Psoas muscle (tissue), 8 donors: ENCODE measurements at regions of chr4 and their contacts with region 1.

Region 1: GRCh38 chr4:139499026-139499585 is 45.2 kb downstream of the RAB33B start:
- DNase-seq: no peak
- ATAC-seq: no peak
- H3K4me3 ChIP-seq: no peak overlapping the region
- H3K27ac ChIP-seq: no peak overlapping the region
- H3K4me1 ChIP-seq: peaks cover 9% of the 10 kb centered on the region
- H3K27me3 ChIP-seq: no peaks in the 10 kb centered on the region
- CTCF ChIP-seq: no peak

Region 2: GRCh38 chr4:139530833-139531427 is 31.8 kb after region 1 on chr4:
- intact Hi-C with region 1: loop called in 1 of 2 experiments (anchors 5 kb)
- DNase-seq: peak in 1 of 2 donors; percentile 31
- ATAC-seq: peak; percentile 43 to 71 (median 64)
- H3K4me3 ChIP-seq: no peak overlapping the region
- H3K27ac ChIP-seq: peak overlapping the region; percentile 5
- H3K4me1 ChIP-seq: peaks cover 29% of the 10 kb centered on the region
- H3K27me3 ChIP-seq: no peaks in the 10 kb centered on the region
- CTCF ChIP-seq: peak; percentile 66

Region 3: GRCh38 chr4:139633661-139634060 is 134.6 kb after region 1 on chr4:
- intact Hi-C with region 1: loop called in 1 of 2 experiments (anchors 5 kb)
- DNase-seq: peak in 1 of 2 donors; percentile 22
- ATAC-seq: peak; percentile 67 to 87 (median 81)
- H3K4me3 ChIP-seq: peak overlapping the region; percentile 25
- H3K27ac ChIP-seq: no peak overlapping the region
- H3K4me1 ChIP-seq: no peaks in the 10 kb centered on the region
- H3K27me3 ChIP-seq: no peaks in the 10 kb centered on the region
- CTCF ChIP-seq: peak; percentile 51

Region 4: DNA sequence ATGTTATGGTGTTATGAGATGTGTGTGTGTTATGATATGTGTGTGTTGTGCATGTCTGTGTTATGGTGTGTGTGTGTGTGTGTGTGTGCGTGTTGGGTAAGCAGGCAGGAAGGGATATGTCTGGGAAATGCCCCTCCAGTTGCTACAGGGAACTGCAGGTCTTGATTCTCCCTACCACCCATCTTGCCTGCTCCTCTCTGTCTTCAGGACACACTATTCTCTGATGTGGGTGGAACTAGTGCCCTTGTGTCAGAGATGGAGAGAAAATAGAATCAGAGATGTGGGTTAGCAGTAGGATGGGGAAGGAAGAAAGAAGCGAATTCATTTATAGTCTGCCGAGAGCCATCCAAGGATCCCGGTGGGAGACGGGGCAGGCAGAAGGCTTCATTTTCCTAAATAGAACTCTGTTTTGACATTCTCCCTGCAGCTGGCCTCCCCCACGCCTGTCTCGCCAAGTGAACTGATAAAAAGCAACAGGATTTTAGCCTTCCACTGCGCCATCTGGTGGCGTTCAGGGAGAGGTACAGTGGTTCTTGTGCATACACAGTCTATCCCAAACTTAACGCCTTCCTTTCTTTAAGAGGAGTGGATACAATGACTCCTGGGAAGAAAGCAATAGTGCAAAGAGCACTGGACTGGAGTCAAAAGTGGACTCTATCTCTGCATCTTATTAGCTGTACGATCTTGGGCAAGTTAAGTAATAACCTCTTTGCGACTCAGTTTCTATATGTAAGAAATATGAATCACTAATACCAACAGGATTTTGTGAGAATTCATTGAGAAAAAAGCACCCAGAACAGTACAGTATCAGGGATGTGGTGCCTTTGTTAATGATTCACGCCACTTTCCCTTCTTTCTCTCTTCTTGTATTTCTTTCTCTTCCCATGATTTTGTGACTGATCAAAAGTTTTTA is 152.4 kb after region 1 on chr4:
- intact Hi-C with region 1: loop called (anchors 5 kb)
- DNase-seq: peak; percentile 83 to 88
- ATAC-seq: peak; percentile 70 to 93 (median 82)
- H3K4me3 ChIP-seq: no peak overlapping the region
- H3K27ac ChIP-seq: no peak overlapping the region
- H3K4me1 ChIP-seq: peaks cover 8% of the 10 kb centered on the region
- H3K27me3 ChIP-seq: no peaks in the 10 kb centered on the region
- CTCF ChIP-seq: peak; percentile 94